Right ventricle myocardium inferior (tissue), 1 donor: ENCODE measurements at regions of chr11 and their contacts with region 1.

Region 1: GRCh38 chr11:75140269-75141138 is 10.4 kb upstream of the SLCO2B1 start:
- DNase-seq: peak; percentile 92
- ATAC-seq: peak; percentile 48

Region 2: DNA sequence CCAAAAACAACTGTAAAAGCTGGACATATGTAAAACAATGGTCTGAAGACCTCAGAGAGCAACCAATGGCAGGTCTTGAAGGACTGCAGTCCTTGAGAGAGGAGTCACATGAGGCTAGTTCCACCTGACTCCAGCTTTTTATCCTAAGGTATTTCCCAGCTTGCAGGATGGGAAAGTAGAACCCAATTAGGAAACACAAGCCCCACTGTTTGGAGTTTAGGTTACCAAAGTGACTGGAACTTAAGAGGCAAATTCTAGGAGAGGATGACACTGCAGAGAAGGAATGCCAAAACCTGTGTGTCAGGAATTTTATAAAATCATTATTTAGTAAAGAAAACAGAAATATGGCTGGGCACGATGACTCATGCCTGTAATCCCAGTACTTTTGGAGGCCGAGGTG is 62.3 kb before region 1 on chr11:
- intact Hi-C with region 1: no loop called
- DNase-seq: no peak
- ATAC-seq: no peak

Region 3: GRCh38 chr11:75096456-75097172 is 43.9 kb before region 1 on chr11 and contains the start of gene OR2AT4:
- intact Hi-C with region 1: no loop called
- DNase-seq: no peak
- ATAC-seq: no peak
- total RNA-seq, gene OR2AT4: not detected

Region 4: GRCh38 chr11:75204685-75205563 is 64.4 kb after region 1 on chr11:
- intact Hi-C with region 1: loop called (anchors 1 kb)
- DNase-seq: peak; percentile 94
- ATAC-seq: peak; percentile 92

Region 5: DNA sequence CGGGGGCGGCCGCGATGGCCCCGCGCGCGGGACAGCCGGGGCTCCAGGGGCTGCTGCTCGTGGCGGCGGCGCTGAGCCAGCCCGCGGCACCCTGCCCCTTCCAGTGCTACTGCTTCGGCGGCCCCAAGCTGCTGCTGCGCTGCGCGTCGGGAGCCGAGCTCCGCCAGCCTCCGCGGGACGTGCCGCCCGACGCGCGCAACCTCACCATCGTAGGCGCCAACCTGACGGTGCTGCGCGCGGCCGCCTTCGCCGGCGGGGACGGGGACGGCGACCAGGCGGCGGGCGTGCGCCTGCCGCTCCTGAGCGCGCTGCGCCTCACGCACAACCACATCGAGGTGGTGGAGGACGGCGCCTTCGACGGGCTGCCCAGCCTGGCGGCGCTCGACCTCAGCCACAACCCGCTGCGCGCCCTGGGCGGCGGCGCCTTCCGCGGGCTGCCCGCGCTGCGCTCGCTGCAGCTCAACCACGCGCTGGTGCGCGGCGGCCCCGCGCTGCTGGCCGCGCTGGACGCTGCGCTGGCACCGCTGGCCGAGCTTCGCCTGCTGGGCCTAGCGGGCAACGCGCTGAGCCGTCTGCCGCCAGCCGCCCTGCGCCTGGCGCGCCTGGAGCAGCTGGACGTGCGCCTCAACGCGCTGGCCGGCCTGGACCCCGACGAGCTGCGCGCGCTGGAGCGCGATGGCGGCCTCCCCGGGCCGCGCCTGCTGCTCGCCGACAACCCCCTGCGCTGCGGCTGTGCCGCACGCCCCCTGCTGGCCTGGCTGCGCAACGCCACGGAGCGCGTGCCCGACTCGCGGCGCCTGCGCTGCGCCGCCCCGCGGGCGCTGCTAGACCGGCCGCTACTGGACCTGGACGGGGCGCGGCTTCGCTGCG is 100.8 kb after region 1 on chr11:
- intact Hi-C with region 1: loop called (anchors 2 kb)
- DNase-seq: peak; percentile 92
- ATAC-seq: peak; percentile 97

Region 6: DNA sequence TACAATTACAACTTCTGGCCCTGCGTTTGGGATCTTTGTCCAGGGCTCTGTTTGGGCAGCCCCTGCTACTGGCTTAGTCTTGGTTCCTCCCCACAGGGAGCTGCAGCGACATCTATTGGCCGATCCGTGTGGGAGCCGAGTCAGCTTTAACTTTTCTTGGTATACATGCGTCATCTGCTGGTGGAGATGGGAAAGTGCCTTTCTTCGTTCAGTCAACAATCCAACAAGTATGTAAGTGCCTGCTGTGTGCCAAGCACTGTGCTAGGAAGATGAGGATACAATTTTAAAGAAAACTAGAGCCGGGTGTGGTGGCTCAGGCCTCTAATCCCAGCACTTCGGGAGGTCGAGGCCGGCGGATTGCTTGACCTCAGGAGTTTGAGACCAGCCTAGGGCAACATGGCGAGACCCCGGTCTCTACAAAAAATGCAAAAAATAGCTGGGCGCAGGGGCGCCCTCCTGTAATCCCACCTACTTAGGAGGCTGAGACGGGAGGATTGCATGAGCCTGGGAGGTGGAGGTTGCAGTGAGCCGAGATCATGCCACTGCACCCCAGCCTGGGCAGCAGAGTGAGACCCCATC is 108.3 kb after region 1 on chr11:
- intact Hi-C with region 1: loop called (anchors 2 kb)
- DNase-seq: peak; percentile 88
- ATAC-seq: peak; percentile 93